ENCODE measurements at regions of chr3 and their contacts with region 1.

Region 1: DNA sequence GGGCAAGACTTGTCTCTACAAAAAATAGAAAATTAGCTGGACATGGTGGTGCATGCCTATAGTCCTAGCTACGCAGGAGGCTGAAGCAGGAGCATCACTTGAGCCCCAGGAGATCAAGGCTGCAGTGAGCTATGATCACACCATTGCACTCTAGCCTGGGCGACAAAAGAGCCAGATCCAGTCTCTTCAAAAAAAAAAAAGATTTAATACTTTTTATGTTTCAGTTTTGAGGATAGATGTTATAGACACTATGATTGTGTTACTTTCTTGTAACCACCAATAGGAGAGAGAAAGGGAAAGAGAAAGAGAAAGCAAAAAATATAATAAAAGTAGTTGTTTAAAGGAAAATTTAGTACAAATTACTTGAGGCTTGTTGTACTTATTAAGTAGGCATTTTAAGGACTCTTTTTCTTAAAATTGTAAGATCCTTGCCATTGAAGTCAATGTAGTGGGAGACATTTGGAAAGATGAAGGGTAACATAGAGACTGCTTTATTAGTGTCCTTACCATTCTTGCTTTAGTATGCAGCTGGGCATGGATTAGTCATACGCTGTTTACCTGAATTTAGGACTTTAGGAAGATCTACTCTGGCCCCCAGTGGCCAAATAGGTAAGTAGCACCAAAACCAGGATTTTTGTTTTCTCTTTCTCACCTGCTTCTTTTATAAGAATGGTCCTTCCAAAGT is 35.1 kb upstream of the ZDHHC23 start:
- DNase-seq: peak; percentile 68
- ATAC-seq: peak; percentile 97
- H3K4me3 ChIP-seq: peak overlapping the region in 1 of 5 experiments; percentile 22
- H3K4me3 Mint-ChIP-seq: peak overlapping the region; percentile 53
- H3K27ac ChIP-seq: no peak overlapping the region
- H3K27ac Mint-ChIP-seq: peak overlapping the region; percentile 13
- H3K4me1 ChIP-seq: peaks cover 0 to 3% of the 10 kb centered on the region in 2 donors
- H3K4me1 Mint-ChIP-seq: peaks cover 4% of the 10 kb centered on the region
- H3K27me3 ChIP-seq: no peaks in the 10 kb centered on the region
- H3K27me3 Mint-ChIP-seq: no peaks in the 10 kb centered on the region
- CTCF ChIP-seq: peak; percentile 75

Region 2: DNA sequence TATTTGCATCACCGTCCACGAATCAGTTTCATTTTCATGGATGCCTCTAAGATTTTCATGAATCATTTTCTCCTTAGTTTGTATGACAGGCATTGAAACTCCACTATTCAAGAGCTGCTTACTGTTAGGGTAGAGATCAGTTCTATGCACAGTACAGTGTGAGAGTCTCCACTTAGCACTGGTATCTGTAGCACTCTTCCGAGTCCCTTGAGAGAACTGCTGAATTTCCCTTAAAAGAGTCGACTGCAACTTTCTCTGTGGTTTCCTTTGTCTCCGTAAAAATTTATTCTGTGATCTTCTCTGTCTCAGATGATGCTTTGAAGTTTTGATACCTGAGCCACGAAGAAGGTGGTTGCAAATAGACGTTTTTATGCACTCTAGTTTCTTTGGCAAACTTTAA is 907.1 kb before region 1 on chr3:
- CTCF ChIA-PET with region 1: no interaction called
- POLR2A ChIA-PET with region 1: interaction called, 12 read pairs
- intact Hi-C with region 1: no loop called
- DNase-seq: no peak
- ATAC-seq: no peak
- H3K4me3 ChIP-seq: no peak overlapping the region
- H3K4me3 Mint-ChIP-seq: no peak overlapping the region
- H3K27ac ChIP-seq: no peak overlapping the region
- H3K27ac Mint-ChIP-seq: no peak overlapping the region
- H3K4me1 ChIP-seq: no peaks in the 10 kb centered on the region
- H3K4me1 Mint-ChIP-seq: peaks cover 2% of the 10 kb centered on the region
- H3K27me3 ChIP-seq: no peaks in the 10 kb centered on the region
- H3K27me3 Mint-ChIP-seq: no peaks in the 10 kb centered on the region
- CTCF ChIP-seq: no peak

Region 3: GRCh38 chr3:113441051-113441770 is 471.5 kb before region 1 on chr3 and contains the start of gene CFAP44:
- CTCF ChIA-PET with region 1: no interaction called
- POLR2A ChIA-PET with region 1: interaction called, 11 read pairs
- intact Hi-C with region 1: no loop called
- DNase-seq: peak; percentile 72
- ATAC-seq: peak; percentile 66
- H3K4me3 ChIP-seq: peak within 1 kb of the TSS in 4 of 5 experiments; percentile 36 to 46 (median 40)
- H3K4me3 Mint-ChIP-seq: peak within 1 kb of the TSS; percentile 63
- H3K27ac ChIP-seq: no peak within 1 kb of the TSS
- H3K27ac Mint-ChIP-seq: no peak within 1 kb of the TSS
- H3K4me1 ChIP-seq: peaks cover 0 to 5% of the 10 kb centered on the region in 2 donors
- H3K4me1 Mint-ChIP-seq: peaks cover 2% of the 10 kb centered on the region
- H3K27me3 ChIP-seq: no peaks in the 10 kb centered on the region
- H3K27me3 Mint-ChIP-seq: no peaks in the 10 kb centered on the region
- CTCF ChIP-seq: no peak
- total RNA-seq, gene CFAP44: 33.8 and 35.0 TPM in 2 replicates

Region 4: GRCh38 chr3:113736548-113737089 is 176.1 kb before region 1 on chr3:
- CTCF ChIA-PET with region 1: interaction called, 36 read pairs
- POLR2A ChIA-PET with region 1: interaction called, 3 read pairs
- intact Hi-C with region 1: loop called (anchors 1 kb)
- DNase-seq: peak; percentile 80
- ATAC-seq: peak; percentile 85
- H3K4me3 ChIP-seq: no peak overlapping the region
- H3K4me3 Mint-ChIP-seq: no peak overlapping the region
- H3K27ac ChIP-seq: peak overlapping the region in 1 of 2 donors; percentile 32
- H3K27ac Mint-ChIP-seq: peak overlapping the region; percentile 68
- H3K4me1 ChIP-seq: peaks cover 7 to 8% of the 10 kb centered on the region in 2 donors
- H3K4me1 Mint-ChIP-seq: peaks cover 44% of the 10 kb centered on the region
- H3K27me3 ChIP-seq: no peaks in the 10 kb centered on the region
- H3K27me3 Mint-ChIP-seq: no peaks in the 10 kb centered on the region
- CTCF ChIP-seq: peak; percentile 80

Region 5: GRCh38 chr3:113844622-113845222 is 68.0 kb before region 1 on chr3:
- CTCF ChIA-PET with region 1: interaction called, 40 read pairs
- POLR2A ChIA-PET with region 1: no interaction called
- intact Hi-C with region 1: loop called (anchors 1 kb)
- DNase-seq: peak; percentile 53
- ATAC-seq: peak; percentile 36
- H3K4me3 ChIP-seq: no peak overlapping the region
- H3K4me3 Mint-ChIP-seq: no peak overlapping the region
- H3K27ac ChIP-seq: no peak overlapping the region
- H3K27ac Mint-ChIP-seq: no peak overlapping the region
- H3K4me1 ChIP-seq: peaks cover 0 to under 1% of the 10 kb centered on the region in 2 donors
- H3K4me1 Mint-ChIP-seq: peaks cover 12% of the 10 kb centered on the region
- H3K27me3 ChIP-seq: no peaks in the 10 kb centered on the region
- H3K27me3 Mint-ChIP-seq: no peaks in the 10 kb centered on the region
- CTCF ChIP-seq: peak; percentile 75

Region 6: DNA sequence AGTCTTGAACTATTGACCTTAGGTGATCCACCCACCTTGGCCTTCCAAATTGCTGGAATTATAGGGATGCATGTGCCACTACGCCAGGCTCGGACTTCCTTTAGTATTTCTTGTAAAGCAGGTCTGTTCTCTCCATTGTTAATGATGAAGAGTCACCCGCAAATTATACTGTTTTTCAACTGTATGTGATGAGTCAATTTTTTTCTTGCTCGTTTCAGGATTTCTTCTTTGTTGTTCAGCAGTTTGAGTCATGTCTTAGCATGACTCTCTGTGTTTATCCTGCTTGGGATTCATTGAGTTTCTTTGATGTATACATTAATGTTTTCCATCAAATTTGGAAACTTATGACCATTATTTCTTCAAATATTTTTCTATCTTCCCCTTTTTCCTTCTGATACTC is 45.2 kb before region 1 on chr3:
- CTCF ChIA-PET with region 1: no interaction called
- POLR2A ChIA-PET with region 1: no interaction called
- intact Hi-C with region 1: no loop called
- DNase-seq: no peak
- ATAC-seq: no peak
- H3K4me3 ChIP-seq: no peak overlapping the region
- H3K4me3 Mint-ChIP-seq: no peak overlapping the region
- H3K27ac ChIP-seq: no peak overlapping the region
- H3K27ac Mint-ChIP-seq: no peak overlapping the region
- H3K4me1 ChIP-seq: no peaks in the 10 kb centered on the region
- H3K4me1 Mint-ChIP-seq: no peaks in the 10 kb centered on the region
- H3K27me3 ChIP-seq: no peaks in the 10 kb centered on the region
- H3K27me3 Mint-ChIP-seq: no peaks in the 10 kb centered on the region
- CTCF ChIP-seq: no peak

Measured in B cell (primary cell).